ENCODE measurements at regions of chr9 and their contacts with region 1.

Region 1: GRCh38 chr9:19102631-19103345 is at the start of gene HAUS6:
- DNase-seq: peak; percentile 96 to 98
- H3K4me3 ChIP-seq: peak within 1 kb of the TSS; percentile 73 to 74
- H3K27ac ChIP-seq: peak within 1 kb of the TSS; percentile 78 to 83
- H3K4me1 ChIP-seq: peaks cover 0 to 13% (median 12%) of the 10 kb centered on the region in 4 donors
- H3K27me3 ChIP-seq: no peaks in the 10 kb centered on the region
- CTCF ChIP-seq: peak; percentile 65 to 87

Region 2: GRCh38 chr9:18920141-18921084 is 182.4 kb before region 1 on chr9:
- intact Hi-C with region 1: no loop called
- DNase-seq: no peak
- H3K4me3 ChIP-seq: no peak overlapping the region
- H3K27ac ChIP-seq: no peak overlapping the region
- H3K4me1 ChIP-seq: peaks cover 0 to 35% (median 13%) of the 10 kb centered on the region in 4 donors
- H3K27me3 ChIP-seq: no peaks in the 10 kb centered on the region
- CTCF ChIP-seq: no peak

Region 3: DNA sequence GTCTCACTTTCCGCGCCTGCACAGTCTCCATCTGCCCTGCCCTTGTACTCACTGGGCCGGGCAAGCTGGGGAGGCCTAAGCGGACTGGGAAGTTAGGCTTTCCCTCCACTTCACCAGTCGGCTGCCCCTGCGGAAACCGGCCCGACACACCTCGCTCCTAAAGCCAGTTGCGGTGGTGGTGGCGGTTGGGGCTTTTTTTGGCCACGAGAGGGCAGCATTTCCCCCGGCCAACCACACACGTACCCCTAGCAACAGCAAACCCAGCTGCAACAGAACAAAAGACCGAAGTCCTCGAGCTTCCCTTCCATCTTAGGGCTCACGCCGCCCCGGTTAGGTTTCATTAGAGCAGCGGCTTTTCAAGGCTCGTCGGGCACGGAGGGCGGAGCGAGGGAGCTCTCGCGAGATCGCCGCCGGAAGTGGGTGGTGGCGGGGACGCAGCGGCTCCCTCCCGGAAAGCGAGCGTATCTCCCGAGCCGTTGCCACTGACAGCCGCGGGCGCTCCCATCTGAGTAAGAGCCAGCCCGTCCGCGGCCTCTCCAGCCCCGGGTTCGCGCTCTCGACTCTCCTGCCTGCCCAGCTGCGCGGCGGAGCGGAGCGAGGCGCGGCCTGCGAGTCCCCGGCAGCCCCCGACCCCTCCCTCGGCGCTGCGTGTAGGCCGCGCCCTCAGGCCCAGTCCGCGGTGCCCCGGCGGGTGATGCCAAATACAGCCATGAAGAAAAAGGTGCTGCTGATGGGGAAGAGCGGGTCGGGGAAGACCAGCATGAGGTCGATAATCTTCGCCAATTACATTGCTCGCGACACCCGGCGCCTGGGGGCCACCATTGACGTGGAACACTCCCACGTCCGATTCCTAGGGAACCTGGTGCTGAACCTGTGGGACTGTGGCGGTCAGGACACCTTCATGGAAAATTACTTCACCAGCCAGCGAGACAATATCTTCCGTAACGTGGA is 53.5 kb before region 1 on chr9 and contains the start of gene RRAGA:
- intact Hi-C with region 1: loop called (anchors 10 kb)
- DNase-seq: peak; percentile 91 to 96
- H3K4me3 ChIP-seq: peak within 1 kb of the TSS; percentile 79 to 82
- H3K27ac ChIP-seq: peak within 1 kb of the TSS; percentile 96 to 97
- H3K4me1 ChIP-seq: peaks cover 5 to 39% (median 16%) of the 10 kb centered on the region in 4 donors
- H3K27me3 ChIP-seq: no peaks in the 10 kb centered on the region
- CTCF ChIP-seq: peak; percentile 84 to 93

Region 4: DNA sequence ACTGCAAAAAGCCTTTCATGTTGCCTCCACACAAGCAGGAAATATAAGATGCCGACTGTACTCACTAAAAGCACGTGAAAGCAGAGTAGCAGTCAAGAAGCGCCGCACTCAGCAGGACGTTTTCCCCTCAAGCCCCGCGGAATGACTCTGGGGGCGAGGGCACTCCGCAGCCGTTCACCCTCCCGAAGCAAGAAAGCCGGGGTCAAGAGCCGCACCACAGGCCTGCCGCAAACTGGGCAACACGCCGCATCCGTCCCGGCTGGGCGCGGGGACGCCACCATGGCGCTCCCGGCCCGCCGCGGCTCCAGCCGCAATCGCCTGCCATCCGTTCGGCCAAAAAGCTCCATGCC is 276.9 kb after region 1 on chr9:
- intact Hi-C with region 1: loop called (anchors 10 kb)
- DNase-seq: peak; percentile 26 to 75
- H3K4me3 ChIP-seq: peak overlapping the region; percentile 61 to 82
- H3K27ac ChIP-seq: peak overlapping the region; percentile 92 to 93
- H3K4me1 ChIP-seq: peaks cover 0 to 28% (median 17%) of the 10 kb centered on the region in 4 donors
- H3K27me3 ChIP-seq: no peaks in the 10 kb centered on the region
- CTCF ChIP-seq: no peak